Activated CD4-positive, alpha-beta T cell treated with anti-CD3 and anti-CD28 coated beads for 36 hours (primary cell): ENCODE measurements at regions of chr12 and their contacts with region 1.

Region 1: DNA sequence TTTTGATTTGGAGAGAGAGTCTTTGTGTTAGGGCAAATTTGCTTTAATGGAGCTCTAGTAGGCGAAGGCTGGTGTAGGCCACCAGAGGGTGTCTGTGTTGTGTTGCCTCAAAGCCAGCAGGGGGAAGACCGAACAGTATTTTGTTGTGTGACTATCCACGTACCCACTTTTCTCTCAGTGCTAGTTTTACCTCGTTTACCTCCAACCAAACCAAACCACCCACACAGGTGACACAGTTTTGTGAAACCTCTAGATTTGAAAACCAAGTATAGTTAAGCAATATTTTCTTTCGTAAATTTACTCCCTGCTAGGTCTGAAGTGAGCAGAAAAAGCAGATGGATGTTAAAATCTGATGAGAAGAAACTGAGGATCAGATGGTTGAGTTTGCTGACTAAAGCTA is 36.3 kb upstream of the NPFF start:
- DNase-seq: peak; percentile 79
- ATAC-seq: peak; percentile 99
- H3K4me3 Mint-ChIP-seq: no peak overlapping the region
- H3K27ac Mint-ChIP-seq: peak overlapping the region; percentile 78
- H3K4me1 Mint-ChIP-seq: peaks cover 20% of the 10 kb centered on the region
- H3K27me3 Mint-ChIP-seq: no peaks in the 10 kb centered on the region

Region 2: GRCh38 chr12:53495903-53496751 is 47.4 kb before region 1 on chr12:
- CTCF ChIA-PET with region 1: no interaction called
- POLR2A ChIA-PET with region 1: no interaction called
- intact Hi-C with region 1: no loop called
- DNase-seq: no peak
- ATAC-seq: no peak
- H3K4me3 Mint-ChIP-seq: no peak overlapping the region
- H3K27ac Mint-ChIP-seq: no peak overlapping the region
- H3K4me1 Mint-ChIP-seq: peaks cover 36% of the 10 kb centered on the region
- H3K27me3 Mint-ChIP-seq: no peaks in the 10 kb centered on the region

Region 3: DNA sequence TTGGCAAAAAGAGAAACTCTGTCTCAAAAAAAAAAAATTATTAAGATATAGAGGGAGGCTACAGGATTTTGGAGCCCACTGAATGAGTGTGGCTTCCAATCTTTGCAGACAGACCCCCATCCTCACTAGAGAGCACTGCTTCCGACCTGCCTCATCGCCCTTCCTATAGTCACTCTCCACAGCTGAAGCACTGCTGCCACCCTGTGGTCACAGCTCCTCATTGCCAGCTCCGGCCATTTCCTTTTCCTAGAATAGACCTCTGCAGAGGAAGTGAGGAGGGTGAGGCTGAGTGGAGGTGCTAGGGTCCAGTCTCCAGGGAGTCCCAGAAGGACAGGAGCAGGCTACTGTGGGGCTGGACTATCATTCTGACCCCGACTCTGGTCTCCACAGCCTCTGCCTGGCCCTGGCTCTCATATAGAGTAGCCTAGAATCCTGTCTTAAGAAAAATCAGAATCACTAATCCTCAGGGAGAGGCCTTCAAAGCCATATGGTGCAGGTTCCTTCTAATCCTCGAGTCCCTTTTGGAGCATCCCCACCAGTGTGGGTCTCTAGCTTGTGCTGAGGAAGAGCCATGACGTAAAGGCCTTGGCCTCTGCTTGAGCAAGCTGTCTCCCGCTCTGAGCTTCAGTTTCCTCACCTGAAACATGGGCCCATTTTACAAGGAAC is 34.9 kb before region 1 on chr12:
- CTCF ChIA-PET with region 1: interaction called, 14 read pairs
- POLR2A ChIA-PET with region 1: no interaction called
- intact Hi-C with region 1: no loop called
- DNase-seq: peak; percentile 92
- ATAC-seq: peak; percentile 99
- H3K4me3 Mint-ChIP-seq: no peak overlapping the region
- H3K27ac Mint-ChIP-seq: peak overlapping the region; percentile 47
- H3K4me1 Mint-ChIP-seq: peaks cover 7% of the 10 kb centered on the region
- H3K27me3 Mint-ChIP-seq: no peaks in the 10 kb centered on the region

Region 4: GRCh38 chr12:53561590-53561953 is 18.0 kb after region 1 on chr12:
- CTCF ChIA-PET with region 1: interaction called, 8 read pairs
- POLR2A ChIA-PET with region 1: no interaction called
- intact Hi-C with region 1: loop called in 1 of 2 experiments (anchors 1 kb)
- DNase-seq: no peak
- ATAC-seq: peak; percentile 93
- H3K4me3 Mint-ChIP-seq: no peak overlapping the region
- H3K27ac Mint-ChIP-seq: peak overlapping the region; percentile 76
- H3K4me1 Mint-ChIP-seq: peaks cover 63% of the 10 kb centered on the region
- H3K27me3 Mint-ChIP-seq: no peaks in the 10 kb centered on the region

Region 5: GRCh38 chr12:53670299-53670698 is 126.8 kb after region 1 on chr12:
- CTCF ChIA-PET with region 1: interaction called, 103 read pairs
- POLR2A ChIA-PET with region 1: interaction called, 5 read pairs
- intact Hi-C with region 1: no loop called
- DNase-seq: no peak
- ATAC-seq: no peak
- H3K4me3 Mint-ChIP-seq: no peak overlapping the region
- H3K27ac Mint-ChIP-seq: peak overlapping the region; percentile 72
- H3K4me1 Mint-ChIP-seq: peaks cover 32% of the 10 kb centered on the region
- H3K27me3 Mint-ChIP-seq: no peaks in the 10 kb centered on the region

Region 6: DNA sequence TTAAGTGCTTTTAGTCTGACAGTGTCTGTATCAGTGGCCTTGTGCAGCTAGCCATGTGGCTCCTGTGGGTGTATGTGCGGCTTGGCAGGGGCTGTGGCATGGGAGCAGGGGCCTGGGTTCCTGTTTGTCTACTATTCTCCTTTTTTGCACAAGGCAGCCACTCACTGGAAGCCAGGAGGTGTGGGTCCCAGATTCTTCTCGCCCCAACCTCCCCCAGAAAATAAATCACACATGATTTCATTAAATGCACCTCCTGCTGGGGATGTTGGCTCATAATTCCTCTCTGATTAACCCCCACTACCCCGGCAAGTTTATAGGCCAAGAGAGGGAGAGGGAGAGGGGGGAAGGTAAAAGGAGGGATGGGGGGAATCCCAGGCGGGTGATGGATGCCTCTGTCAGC is 166.1 kb after region 1 on chr12:
- CTCF ChIA-PET with region 1: no interaction called
- POLR2A ChIA-PET with region 1: no interaction called
- intact Hi-C with region 1: no loop called
- DNase-seq: no peak
- ATAC-seq: no peak
- H3K4me3 Mint-ChIP-seq: no peak overlapping the region
- H3K27ac Mint-ChIP-seq: no peak overlapping the region
- H3K4me1 Mint-ChIP-seq: no peaks in the 10 kb centered on the region
- H3K27me3 Mint-ChIP-seq: peaks cover 14% of the 10 kb centered on the region